Heart left ventricle (tissue), 16 donors: ENCODE measurements at regions of chr18 and their contacts with region 1.

Region 1: DNA sequence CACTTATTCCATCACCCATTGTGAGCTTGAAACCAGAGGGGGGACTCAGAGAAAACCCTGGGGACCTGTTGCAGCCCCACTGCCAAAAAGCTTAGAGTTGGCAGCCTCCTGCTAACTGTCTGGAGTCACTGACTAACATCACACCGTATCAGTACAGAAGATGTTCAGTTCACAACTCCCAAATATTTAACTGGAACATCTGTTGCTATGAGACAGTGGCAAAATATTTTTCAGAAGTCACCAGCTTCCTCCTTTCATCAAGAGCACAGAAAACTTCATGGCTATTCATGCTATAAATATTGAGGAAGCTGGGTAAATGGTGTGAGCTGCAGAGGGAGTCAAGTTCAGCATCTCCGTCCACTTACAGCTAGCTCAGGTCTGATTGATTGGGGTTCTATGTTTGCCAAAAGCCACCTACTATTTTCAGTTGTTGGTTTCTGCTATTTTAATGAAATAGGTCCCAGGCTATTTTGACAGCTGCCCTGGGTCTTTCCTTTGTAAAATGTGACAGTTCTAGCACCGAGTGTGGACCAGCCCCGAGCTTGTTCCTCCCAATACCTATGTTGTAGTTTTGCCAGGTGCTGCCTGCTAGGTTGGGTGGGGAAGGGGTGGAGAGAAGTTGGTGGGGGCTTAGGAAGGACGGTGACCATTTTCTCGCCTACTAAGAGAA is 9.8 kb downstream of the TUBB6 start:
- DNase-seq: peak in 1 of 5 donors; percentile 45
- ATAC-seq: peak; percentile 65 to 77 (median 76)
- H3K4me3 ChIP-seq: no peak overlapping the region
- H3K27ac ChIP-seq: peak overlapping the region; percentile 41 to 84 (median 64)
- H3K4me1 ChIP-seq: peaks cover 0 to 67% (median 55%) of the 10 kb centered on the region in 12 donors
- H3K27me3 ChIP-seq: no peaks in the 10 kb centered on the region
- CTCF ChIP-seq: no peak
- POLR2A ChIP-seq: no peak

Region 2: DNA sequence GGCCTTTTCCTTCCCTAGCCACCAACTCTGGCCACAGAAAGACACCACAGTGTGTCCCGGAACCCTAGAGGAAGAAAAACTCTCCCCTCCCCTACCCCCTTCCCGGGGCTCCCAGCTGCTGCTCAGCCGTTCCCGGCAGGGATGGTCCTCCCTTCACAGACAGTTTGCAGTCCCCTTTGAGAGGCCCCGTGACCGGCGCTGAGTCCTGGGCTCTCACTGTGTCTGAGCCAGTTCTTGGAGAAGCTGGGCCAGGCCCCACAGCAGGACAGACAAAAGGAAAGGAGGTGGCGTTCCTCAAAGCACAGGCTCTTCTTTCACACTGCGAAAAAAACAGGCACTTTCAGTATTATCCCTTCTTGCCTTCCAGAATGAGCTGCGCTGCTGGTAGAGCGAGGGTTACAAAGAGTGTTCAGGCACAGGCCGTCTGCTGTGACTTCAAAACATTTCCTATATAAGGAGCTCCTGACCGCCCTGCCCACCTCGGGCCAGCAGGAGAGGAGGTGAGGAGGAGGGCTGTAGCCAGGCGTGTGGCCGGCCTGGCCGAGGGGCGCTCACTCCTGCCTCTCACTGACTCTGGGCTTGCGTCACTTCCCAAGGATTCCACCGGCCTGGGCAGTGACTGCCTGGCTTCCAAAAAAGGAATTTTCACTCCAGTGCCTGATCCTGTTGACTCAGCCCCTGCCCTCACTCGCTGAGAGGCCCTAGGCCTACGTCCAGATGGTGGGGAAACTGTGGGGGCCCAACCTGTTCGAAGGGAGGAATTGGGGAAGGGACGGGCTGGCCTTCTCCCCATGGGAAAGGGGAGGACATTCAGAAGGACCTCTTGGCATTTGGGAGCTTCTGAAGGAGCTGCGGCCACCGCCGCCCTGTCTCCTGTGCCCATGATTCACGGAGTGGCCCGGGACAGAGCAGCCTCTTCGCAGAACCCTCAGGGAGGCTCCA is 38.8 kb before region 1 on chr18:
- intact Hi-C with region 1: loop called in 1 of 10 experiments (anchors 5 kb)
- DNase-seq: peak; percentile 88 to 95 (median 90)
- ATAC-seq: peak; percentile 93 to 96 (median 95)
- H3K4me3 ChIP-seq: peak overlapping the region; percentile 3 to 61 (median 48)
- H3K27ac ChIP-seq: peak overlapping the region; percentile 87 to 100 (median 96)
- H3K4me1 ChIP-seq: peaks cover 0 to 34% (median 22%) of the 10 kb centered on the region in 12 donors
- H3K27me3 ChIP-seq: no peaks in the 10 kb centered on the region
- CTCF ChIP-seq: peak in 3 of 12 donors; percentile 12 to 30 (median 15)
- POLR2A ChIP-seq: peak; percentile 71 to 89

Region 3: GRCh38 chr18:12361770-12362378 is 44.1 kb after region 1 on chr18:
- intact Hi-C with region 1: no loop called
- DNase-seq: peak; percentile 78 to 83 (median 80)
- ATAC-seq: peak; percentile 63 to 80 (median 76)
- H3K4me3 ChIP-seq: no peak overlapping the region
- H3K27ac ChIP-seq: peak overlapping the region; percentile 54 to 93 (median 78)
- H3K4me1 ChIP-seq: peaks cover 0 to 71% (median 34%) of the 10 kb centered on the region in 12 donors
- H3K27me3 ChIP-seq: no peaks in the 10 kb centered on the region
- CTCF ChIP-seq: no peak
- POLR2A ChIP-seq: no peak

Region 4: GRCh38 chr18:12420831-12421421 is 103.1 kb after region 1 on chr18:
- intact Hi-C with region 1: no loop called
- DNase-seq: no peak
- ATAC-seq: peak; percentile 22 to 34 (median 32)
- H3K4me3 ChIP-seq: peak overlapping the region in 10 of 12 donors; percentile 2 to 69 (median 58)
- H3K27ac ChIP-seq: no peak overlapping the region
- H3K4me1 ChIP-seq: peaks cover 0 to 20% (median 5%) of the 10 kb centered on the region in 12 donors
- H3K27me3 ChIP-seq: no peaks in the 10 kb centered on the region
- CTCF ChIP-seq: no peak
- POLR2A ChIP-seq: no peak

Region 5: DNA sequence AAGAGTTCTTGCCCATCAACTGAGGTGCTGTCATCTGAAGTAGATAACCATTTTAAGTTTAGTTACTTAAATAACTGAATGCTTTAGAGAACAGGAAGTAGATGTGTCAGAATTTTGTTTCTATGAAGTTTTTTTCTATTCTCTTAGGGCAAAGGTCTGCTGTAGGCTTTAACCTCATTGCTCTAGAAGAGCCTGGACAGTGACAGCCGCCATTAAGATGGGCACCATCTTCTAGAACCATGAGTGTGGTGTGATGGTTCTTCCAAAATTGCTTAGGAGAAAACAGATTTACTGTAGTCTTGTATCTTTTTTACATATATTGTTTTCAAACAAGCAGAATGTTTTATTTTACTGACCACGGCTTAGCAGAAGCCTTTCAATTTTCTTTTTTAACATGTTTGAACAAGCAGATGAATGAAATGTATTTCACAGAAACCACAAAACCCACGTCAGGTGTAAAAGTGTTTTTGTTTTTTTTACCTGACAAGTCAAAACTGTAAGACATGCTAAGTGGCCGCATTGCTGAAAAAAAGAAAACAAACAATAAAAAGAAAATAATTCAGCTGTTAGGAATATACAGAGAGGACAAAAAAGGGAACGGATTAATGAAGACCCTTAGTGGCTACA is 167.8 kb after region 1 on chr18:
- intact Hi-C with region 1: no loop called
- DNase-seq: no peak
- ATAC-seq: no peak
- H3K4me3 ChIP-seq: no peak overlapping the region
- H3K27ac ChIP-seq: no peak overlapping the region
- H3K4me1 ChIP-seq: peaks cover 0 to 4% (median 0%) of the 10 kb centered on the region in 12 donors
- H3K27me3 ChIP-seq: no peaks in the 10 kb centered on the region
- CTCF ChIP-seq: no peak
- POLR2A ChIP-seq: no peak

Region 6: GRCh38 chr18:12765126-12765525 is 447.3 kb after region 1 on chr18:
- intact Hi-C with region 1: no loop called
- DNase-seq: no peak
- ATAC-seq: peak in 1 of 4 donors; percentile 30
- H3K4me3 ChIP-seq: no peak overlapping the region
- H3K27ac ChIP-seq: no peak overlapping the region
- H3K4me1 ChIP-seq: peaks cover 0 to 3% (median 0%) of the 10 kb centered on the region in 12 donors
- H3K27me3 ChIP-seq: no peaks in the 10 kb centered on the region
- CTCF ChIP-seq: no peak
- POLR2A ChIP-seq: no peak